ENCODE measurements at regions of chr16 and their contacts with region 1.

Region 1: DNA sequence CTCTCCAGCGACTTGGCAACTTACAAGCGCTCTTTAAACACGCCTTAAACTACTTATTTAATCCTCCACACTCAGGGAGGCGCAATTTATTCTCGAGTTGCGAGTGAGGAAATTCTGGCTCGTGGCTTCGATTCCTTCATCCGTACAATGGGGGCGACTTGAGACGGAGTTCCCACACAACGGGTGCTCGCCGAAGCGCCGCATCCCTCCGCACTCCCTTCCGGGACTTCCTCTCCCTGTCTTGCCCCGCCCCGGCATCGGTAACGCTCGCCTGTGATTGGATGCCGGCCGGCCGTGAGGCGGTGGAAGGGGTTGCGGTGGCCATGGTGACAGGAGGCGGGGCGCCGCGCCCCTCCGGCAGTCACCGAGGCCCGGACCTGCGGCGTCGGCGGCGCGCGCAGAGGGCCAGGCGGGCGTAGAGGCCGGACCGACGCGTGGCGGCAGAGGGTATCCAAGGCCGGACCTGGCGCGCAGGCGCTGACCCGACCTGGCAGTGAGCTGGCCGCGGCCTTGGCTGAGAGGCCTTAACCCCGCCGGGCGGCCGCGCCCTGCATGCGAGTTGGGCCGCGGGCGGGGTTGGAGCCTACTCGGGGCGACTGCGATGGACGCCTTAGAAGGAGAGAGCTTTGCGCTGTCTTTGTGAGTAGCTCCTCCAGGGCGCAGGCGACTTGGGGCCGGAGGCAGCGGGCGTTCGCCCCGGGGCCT is at the start of gene ARL2BP:
- DNase-seq: peak; percentile 98
- H3K4me3 Mint-ChIP-seq: peak within 1 kb of the TSS; percentile 90
- H3K27ac Mint-ChIP-seq: peak within 1 kb of the TSS; percentile 82
- H3K4me1 Mint-ChIP-seq: peaks cover 18% of the 10 kb centered on the region
- H3K27me3 Mint-ChIP-seq: no peaks in the 10 kb centered on the region
- total RNA-seq, gene ARL2BP: 29.1 and 29.7 TPM in 2 replicates

Region 2: DNA sequence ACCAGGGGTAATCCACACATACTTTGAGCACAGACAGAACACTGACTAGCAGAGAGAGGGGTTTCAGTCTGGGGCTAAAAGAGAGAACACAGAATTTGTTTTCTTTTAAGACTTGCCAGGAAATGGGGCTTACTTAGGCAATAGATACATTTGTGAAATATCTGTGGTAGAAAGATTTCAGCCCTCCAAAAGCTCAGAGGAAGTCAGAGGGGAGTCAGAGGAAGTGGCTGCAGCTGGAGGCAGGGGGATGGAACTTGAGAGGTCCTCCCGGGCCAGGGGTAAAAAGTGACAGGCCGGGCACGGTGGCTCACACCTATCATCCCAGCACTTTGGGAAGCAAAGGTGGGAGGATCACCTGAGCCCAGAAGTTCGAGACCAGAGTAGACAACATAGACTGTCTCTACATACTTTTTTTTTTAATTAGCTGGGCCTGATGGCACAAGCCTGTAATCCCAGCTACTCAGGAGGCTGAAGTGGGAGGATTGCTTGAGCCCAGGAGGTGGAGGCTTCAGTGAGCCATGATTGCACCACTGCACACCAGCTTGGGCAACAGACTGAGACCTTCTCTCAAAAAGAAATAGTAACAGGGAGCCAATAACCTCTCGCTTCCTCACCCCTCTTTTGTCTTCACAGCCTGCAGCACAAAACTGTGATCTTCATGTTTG is 205.6 kb before region 1 on chr16:
- intact Hi-C with region 1: no loop called
- DNase-seq: peak; percentile 26
- H3K4me3 Mint-ChIP-seq: peak overlapping the region; percentile 43
- H3K27ac Mint-ChIP-seq: peak overlapping the region; percentile 90
- H3K4me1 Mint-ChIP-seq: peaks cover 75% of the 10 kb centered on the region
- H3K27me3 Mint-ChIP-seq: no peaks in the 10 kb centered on the region

Region 3: DNA sequence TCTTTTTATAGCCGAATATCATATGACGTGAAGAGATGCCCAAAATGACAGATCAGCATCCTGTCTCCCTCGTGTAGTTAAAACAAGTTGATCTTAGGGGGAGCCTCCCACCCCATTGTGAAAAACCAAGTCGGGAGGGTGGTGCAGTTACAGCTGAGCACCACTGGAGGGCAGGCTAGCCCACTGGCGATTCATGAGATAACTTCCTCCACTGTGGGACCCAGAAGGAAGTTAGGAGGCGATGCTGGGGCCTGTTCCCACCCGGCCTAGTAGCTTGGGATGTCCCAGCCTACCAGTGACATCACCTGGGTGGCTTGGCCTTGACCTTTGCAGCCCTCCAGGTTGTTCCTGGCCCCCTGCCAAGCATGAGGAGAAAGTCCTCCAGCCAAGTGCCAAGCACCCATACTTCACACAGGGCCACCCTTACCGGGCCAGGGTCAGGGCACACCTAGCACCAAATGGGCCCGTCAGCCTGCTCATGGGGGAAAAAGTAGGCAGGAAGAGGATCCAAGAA is 160.6 kb before region 1 on chr16:
- intact Hi-C with region 1: loop called (anchors 1 kb)
- DNase-seq: peak; percentile 64
- H3K4me3 Mint-ChIP-seq: no peak overlapping the region
- H3K27ac Mint-ChIP-seq: peak overlapping the region; percentile 71
- H3K4me1 Mint-ChIP-seq: peaks cover 8% of the 10 kb centered on the region
- H3K27me3 Mint-ChIP-seq: no peaks in the 10 kb centered on the region

Region 4: GRCh38 chr16:57284208-57284951 is 39.5 kb after region 1 on chr16 and contains the start of gene PLLP:
- intact Hi-C with region 1: loop called (anchors 1 kb)
- DNase-seq: peak; percentile 24
- H3K4me3 Mint-ChIP-seq: peak within 1 kb of the TSS; percentile 80
- H3K27ac Mint-ChIP-seq: peak within 1 kb of the TSS; percentile 18
- H3K4me1 Mint-ChIP-seq: peaks cover 8% of the 10 kb centered on the region
- H3K27me3 Mint-ChIP-seq: peaks cover 40% of the 10 kb centered on the region
- total RNA-seq, gene PLLP: 0.26 TPM in 1 of 2 replicates, not detected in the other

Region 5: GRCh38 chr16:57416122-57416509 is 171.2 kb after region 1 on chr16:
- intact Hi-C with region 1: loop called (anchors 2 kb)
- DNase-seq: no peak
- H3K4me3 Mint-ChIP-seq: no peak overlapping the region
- H3K27ac Mint-ChIP-seq: no peak overlapping the region
- H3K4me1 Mint-ChIP-seq: peaks cover 19% of the 10 kb centered on the region
- H3K27me3 Mint-ChIP-seq: peaks cover 2% of the 10 kb centered on the region

Region 6: GRCh38 chr16:57530104-57530521 is 285.2 kb after region 1 on chr16:
- intact Hi-C with region 1: loop called (anchors 5 kb)
- DNase-seq: peak; percentile 64
- H3K4me3 Mint-ChIP-seq: peak overlapping the region; percentile 76
- H3K27ac Mint-ChIP-seq: peak overlapping the region; percentile 97
- H3K4me1 Mint-ChIP-seq: peaks cover 51% of the 10 kb centered on the region
- H3K27me3 Mint-ChIP-seq: no peaks in the 10 kb centered on the region

Region 7: GRCh38 chr16:57816334-57816745 is 571.4 kb after region 1 on chr16:
- intact Hi-C with region 1: no loop called
- DNase-seq: peak; percentile 26
- H3K4me3 Mint-ChIP-seq: no peak overlapping the region
- H3K27ac Mint-ChIP-seq: no peak overlapping the region
- H3K4me1 Mint-ChIP-seq: peaks cover 8% of the 10 kb centered on the region
- H3K27me3 Mint-ChIP-seq: peaks cover 4% of the 10 kb centered on the region